ENCODE measurements at regions of chr11 and their contacts with region 1.

Region 1: DNA sequence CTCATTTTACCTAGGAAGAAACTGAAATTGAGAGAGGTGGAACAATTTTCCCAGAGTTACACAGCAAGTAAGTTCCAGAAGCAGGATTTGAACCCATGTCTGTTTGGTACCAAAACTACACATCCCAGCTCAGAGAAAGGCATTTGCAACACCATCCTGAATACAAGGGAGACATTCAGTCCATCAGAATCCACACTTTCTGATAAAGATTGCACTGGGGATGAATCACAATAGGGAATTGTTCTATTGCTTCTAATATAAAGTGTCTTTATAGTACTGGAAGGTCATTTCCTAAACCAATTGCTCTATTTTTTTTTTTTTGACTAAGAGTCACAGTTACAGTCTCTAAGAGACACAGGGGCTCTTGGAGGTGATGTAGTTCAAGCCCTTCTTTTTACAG is 208.1 kb upstream of the CADM1 start:
- DNase-seq: no peak
- ATAC-seq: no peak
- H3K4me3 ChIP-seq: no peak overlapping the region
- H3K27ac ChIP-seq: no peak overlapping the region
- H3K4me1 ChIP-seq: peaks cover 6% of the 10 kb centered on the region; the same call in 1 of the 2 replicates
- H3K27me3 ChIP-seq: peaks cover 20% of the 10 kb centered on the region
- CTCF ChIP-seq: no peak
- POLR2A ChIP-seq: no peak
- RAD21 ChIP-seq: no peak

Region 2: DNA sequence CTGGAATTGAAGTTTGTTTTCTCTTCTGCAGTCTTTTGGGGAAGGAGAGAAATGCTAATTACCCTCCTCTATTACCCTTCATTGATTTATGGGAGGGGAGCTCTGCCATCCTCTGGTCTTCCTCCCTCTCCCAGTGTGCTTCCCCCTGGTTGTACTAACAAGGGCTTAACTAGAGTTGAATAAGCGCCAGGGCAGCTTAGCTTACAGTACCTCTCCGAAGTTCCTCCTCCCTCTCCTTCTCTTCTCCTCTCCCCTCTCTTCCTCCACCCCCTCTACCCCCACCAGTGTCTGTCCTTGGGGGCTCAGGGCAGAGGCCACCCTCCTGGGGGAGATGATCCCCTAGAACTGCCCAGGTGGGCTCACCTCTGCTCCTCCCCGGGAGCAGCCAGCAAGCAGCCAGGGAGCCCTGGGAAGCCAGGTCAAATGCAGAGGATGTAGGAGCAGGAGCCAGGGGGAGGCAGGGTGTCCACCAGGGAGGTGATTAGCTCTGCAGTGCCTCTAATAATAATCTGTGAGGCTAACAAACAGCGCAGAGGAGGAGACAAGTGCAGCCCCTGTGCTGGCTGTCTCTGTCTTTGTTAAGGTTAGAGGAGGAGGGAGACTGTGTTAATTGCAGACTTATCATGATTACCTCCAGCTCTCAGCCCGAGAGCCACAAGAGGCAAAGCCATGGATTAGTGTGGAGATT is 16.5 kb before region 1 on chr11:
- CTCF ChIA-PET with region 1: no interaction called
- POLR2A ChIA-PET with region 1: no interaction called
- dilution Hi-C with region 1: no loop called
- in situ Hi-C with region 1: no loop called
- intact Hi-C with region 1: loop called (anchors 2 kb)
- DNase-seq: no peak
- ATAC-seq: no peak
- H3K4me3 ChIP-seq: no peak overlapping the region
- H3K27ac ChIP-seq: no peak overlapping the region
- H3K4me1 ChIP-seq: peaks cover 6% of the 10 kb centered on the region; the same call in 1 of the 2 replicates
- H3K27me3 ChIP-seq: peaks cover 14% of the 10 kb centered on the region
- CTCF ChIP-seq: no peak
- POLR2A ChIP-seq: no peak
- RAD21 ChIP-seq: no peak

Region 3: DNA sequence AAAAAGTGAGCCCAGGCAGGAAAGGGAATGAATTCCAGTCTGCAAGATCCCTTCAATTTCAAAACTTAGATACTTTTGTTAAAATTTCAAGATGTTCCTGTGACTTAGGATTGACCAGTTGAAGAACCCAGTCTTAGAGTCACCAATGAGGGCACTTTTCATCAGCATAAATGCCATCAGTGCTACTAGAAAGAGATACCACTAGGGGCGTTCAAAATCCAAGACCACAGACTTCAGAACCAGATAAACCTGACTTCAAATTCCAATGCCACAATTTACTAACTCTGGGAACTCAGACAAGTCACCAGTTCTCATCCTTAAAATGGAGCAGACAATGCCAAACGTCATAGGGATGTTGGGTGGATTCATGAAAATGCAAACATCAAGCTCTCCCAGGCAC is 537.3 kb after region 1 on chr11:
- CTCF ChIA-PET with region 1: no interaction called
- POLR2A ChIA-PET with region 1: no interaction called
- dilution Hi-C with region 1: no loop called
- in situ Hi-C with region 1: no loop called
- intact Hi-C with region 1: no loop called
- DNase-seq: no peak
- ATAC-seq: no peak
- H3K4me3 ChIP-seq: no peak overlapping the region
- H3K27ac ChIP-seq: no peak overlapping the region
- H3K4me1 ChIP-seq: no peaks in the 10 kb centered on the region
- H3K27me3 ChIP-seq: no peaks in the 10 kb centered on the region
- CTCF ChIP-seq: no peak
- POLR2A ChIP-seq: no peak
- RAD21 ChIP-seq: no peak